Activated CD4-positive, alpha-beta T cell treated with anti-CD3 and anti-CD28 coated beads for 36 hours (primary cell): ENCODE measurements at regions of chr17 and their contacts with region 1.

Region 1: GRCh38 chr17:18916816-18917500 is 35.0 kb upstream of the SLC5A10 start:
- DNase-seq: no peak
- ATAC-seq: no peak
- H3K4me3 Mint-ChIP-seq: no peak overlapping the region
- H3K27ac Mint-ChIP-seq: no peak overlapping the region
- H3K4me1 Mint-ChIP-seq: peaks cover 43% of the 10 kb centered on the region
- H3K27me3 Mint-ChIP-seq: no peaks in the 10 kb centered on the region

Region 2: GRCh38 chr17:19024101-19025078 is 107.4 kb after region 1 on chr17:
- CTCF ChIA-PET with region 1: no interaction called
- POLR2A ChIA-PET with region 1: no interaction called
- intact Hi-C with region 1: loop called in 1 of 2 experiments (anchors 10 kb)
- DNase-seq: peak; percentile 42
- ATAC-seq: peak; percentile 80
- H3K4me3 Mint-ChIP-seq: peak overlapping the region; percentile 32
- H3K27ac Mint-ChIP-seq: peak overlapping the region; percentile 86
- H3K4me1 Mint-ChIP-seq: peaks cover 14% of the 10 kb centered on the region
- H3K27me3 Mint-ChIP-seq: no peaks in the 10 kb centered on the region